IMR-90 (cell line): ENCODE measurements at regions of chr10 and their contacts with region 1.

Region 1: GRCh38 chr10:72248468-72249151 is 25.1 kb upstream of the DDIT4 start:
- DNase-seq: no peak
- ATAC-seq: no peak
- H3K4me3 ChIP-seq: no peak overlapping the region
- H3K27ac ChIP-seq: no peak overlapping the region
- H3K4me1 ChIP-seq: peaks cover 20% of the 10 kb centered on the region
- H3K27me3 ChIP-seq: no peaks in the 10 kb centered on the region
- CTCF ChIP-seq: no peak
- POLR2A ChIP-seq: no peak
- RAD21 ChIP-seq: no peak

Region 2: DNA sequence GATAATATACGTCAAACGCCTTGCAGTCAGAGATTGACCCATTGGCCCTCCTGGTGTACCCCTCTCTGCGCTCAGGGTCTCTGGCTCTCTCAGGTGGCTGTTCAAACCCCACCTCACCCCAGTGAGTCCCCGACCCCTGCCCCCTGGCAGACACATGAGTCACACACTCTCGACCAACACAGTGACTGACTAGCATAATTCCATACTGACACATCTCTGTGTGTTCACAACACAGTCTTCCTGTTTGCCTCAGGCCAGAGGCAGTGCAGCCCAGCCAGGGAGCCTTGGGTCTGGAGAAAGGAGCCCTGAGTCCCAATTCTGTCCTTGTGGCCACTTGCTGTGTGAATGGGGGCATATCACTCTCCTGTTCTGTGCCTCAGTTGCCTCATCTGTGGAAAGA is 1729.9 kb before region 1 on chr10:
- CTCF ChIA-PET with region 1: no interaction called
- POLR2A ChIA-PET with region 1: no interaction called
- dilution Hi-C with region 1: no loop called
- in situ Hi-C with region 1: no loop called
- intact Hi-C with region 1: no loop called
- DNase-seq: peak; percentile 70
- ATAC-seq: peak; percentile 87
- H3K4me3 ChIP-seq: no peak overlapping the region
- H3K27ac ChIP-seq: no peak overlapping the region
- H3K4me1 ChIP-seq: peaks cover 3% of the 10 kb centered on the region; the same call in 1 of the 2 replicates
- H3K27me3 ChIP-seq: peaks cover 15% of the 10 kb centered on the region
- CTCF ChIP-seq: no peak
- POLR2A ChIP-seq: no peak
- RAD21 ChIP-seq: no peak

Region 3: DNA sequence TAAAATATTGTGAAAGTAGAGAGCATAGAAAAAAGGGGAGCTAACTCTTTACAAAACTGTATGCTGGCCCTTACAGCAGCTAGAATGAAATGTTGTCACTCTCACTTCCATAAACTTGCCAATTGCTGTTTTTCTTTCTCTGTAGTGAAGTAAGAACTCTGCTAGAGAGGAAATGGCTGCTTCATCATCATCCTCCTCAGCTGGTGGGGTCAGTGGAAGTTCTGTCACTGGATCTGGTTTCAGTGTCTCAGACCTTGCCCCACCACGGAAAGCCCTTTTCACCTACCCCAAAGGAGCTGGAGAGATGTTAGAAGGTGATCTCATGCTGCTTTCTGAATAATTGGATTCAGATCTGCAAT is 24.9 kb before region 1 on chr10:
- CTCF ChIA-PET with region 1: no interaction called
- POLR2A ChIA-PET with region 1: no interaction called
- dilution Hi-C with region 1: no loop called
- in situ Hi-C with region 1: no loop called
- intact Hi-C with region 1: no loop called
- DNase-seq: peak; percentile 45
- ATAC-seq: no peak
- H3K4me3 ChIP-seq: no peak overlapping the region
- H3K27ac ChIP-seq: no peak overlapping the region; the same call in 1 of the 2 replicates
- H3K4me1 ChIP-seq: peaks cover 3% of the 10 kb centered on the region; the same call in 1 of the 2 replicates
- H3K27me3 ChIP-seq: no peaks in the 10 kb centered on the region
- CTCF ChIP-seq: no peak
- POLR2A ChIP-seq: no peak
- RAD21 ChIP-seq: no peak

Region 4: DNA sequence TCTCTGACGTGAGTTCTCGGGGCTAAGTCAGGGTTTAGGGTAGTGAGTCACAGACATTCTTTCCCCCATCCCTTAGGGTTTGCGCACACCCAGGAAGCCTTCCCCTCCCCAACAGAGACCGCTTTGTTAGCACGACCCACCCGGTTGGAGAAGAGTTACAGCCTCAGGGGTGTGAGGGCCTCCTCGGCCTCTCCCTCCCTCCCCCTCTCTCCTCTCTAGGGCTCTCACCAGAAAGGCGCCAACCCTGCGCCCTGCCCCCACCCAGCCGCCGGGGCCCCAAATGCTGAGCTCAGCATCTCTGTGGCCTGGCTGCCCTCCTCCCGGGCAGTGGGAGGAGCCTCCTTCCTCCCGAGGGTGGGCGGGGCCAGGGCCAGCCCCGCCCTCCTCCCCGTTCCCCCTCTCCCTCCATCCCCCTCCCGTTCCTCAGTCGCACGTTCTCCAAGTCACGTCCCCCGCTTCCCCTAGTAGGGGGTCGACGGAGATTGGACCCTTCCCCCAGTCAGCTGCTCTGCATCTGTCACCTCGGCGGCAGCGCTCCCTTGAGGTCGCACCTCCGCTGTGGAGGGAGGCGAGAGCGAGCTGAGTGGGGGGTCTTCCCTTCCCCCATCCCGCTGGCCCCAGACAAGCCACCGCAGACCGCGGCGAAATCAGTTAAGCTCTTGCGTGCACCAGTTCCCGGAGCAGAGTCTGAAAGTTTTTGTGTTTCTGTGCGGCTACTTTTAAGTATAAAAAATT is 12.1 kb after region 1 on chr10:
- CTCF ChIA-PET with region 1: interaction called, 4 read pairs
- POLR2A ChIA-PET with region 1: no interaction called
- dilution Hi-C with region 1: no loop called
- in situ Hi-C with region 1: no loop called
- intact Hi-C with region 1: loop called (anchors 2 kb)
- DNase-seq: peak; percentile 62
- ATAC-seq: peak; percentile 94
- H3K4me3 ChIP-seq: peak overlapping the region; percentile 44
- H3K27ac ChIP-seq: peak overlapping the region; percentile 97
- H3K4me1 ChIP-seq: peaks cover 23% of the 10 kb centered on the region
- H3K27me3 ChIP-seq: no peaks in the 10 kb centered on the region
- CTCF ChIP-seq: no peak
- POLR2A ChIP-seq: no peak
- RAD21 ChIP-seq: no peak

Region 5: GRCh38 chr10:72612203-72612826 is 363.7 kb after region 1 on chr10:
- CTCF ChIA-PET with region 1: no interaction called
- POLR2A ChIA-PET with region 1: no interaction called
- dilution Hi-C with region 1: no loop called
- in situ Hi-C with region 1: no loop called
- intact Hi-C with region 1: no loop called
- DNase-seq: no peak
- ATAC-seq: no peak
- H3K4me3 ChIP-seq: no peak overlapping the region
- H3K27ac ChIP-seq: no peak overlapping the region
- H3K4me1 ChIP-seq: peaks cover 4% of the 10 kb centered on the region; the same call in 1 of the 2 replicates
- H3K27me3 ChIP-seq: no peaks in the 10 kb centered on the region
- CTCF ChIP-seq: no peak
- POLR2A ChIP-seq: no peak
- RAD21 ChIP-seq: no peak